ENCODE measurements at regions of chr19 and their contacts with region 1.

Region 1: DNA sequence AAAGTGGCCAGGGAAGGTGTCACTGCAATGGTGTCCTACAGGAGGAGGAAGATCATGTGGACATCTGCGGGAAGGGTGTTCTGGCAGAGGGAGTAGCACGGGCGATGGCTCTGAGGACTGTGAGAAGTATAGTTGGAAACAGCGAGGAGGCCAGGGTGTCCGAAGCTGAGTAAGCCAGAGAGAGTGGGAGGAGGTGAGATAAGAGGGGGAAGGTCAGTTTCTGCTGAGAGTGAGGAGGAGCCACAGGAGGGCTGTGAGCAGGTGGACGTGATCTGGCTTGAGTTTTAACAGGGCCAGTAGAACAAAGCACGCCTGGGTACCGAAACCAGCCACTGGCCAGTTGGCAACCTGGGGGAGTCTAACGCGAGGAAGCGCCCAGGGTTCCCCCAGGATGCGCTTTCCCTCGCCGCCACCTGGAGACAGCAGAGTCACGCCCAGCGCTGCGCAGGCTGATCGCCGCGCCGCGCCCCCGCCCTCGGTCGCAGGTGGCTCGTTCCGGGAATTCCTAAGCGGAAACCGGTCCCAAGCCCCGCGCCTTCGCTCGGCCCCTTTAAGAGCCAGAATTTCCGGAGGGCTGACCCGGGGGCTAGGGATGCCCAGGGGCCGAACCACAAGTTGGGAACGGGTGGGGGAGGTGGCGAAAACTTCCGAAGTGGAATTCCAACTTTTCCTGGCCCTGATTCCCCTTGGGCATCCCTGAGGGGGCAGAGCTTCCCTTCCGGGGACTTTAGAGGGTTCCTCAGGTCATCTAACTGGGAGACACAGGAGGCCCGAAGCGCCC is 1.1 kb upstream of the LSR start:
- DNase-seq: no peak
- H3K4me3 ChIP-seq: peak overlapping the region; percentile 19
- H3K27ac ChIP-seq: no peak overlapping the region
- H3K4me1 ChIP-seq: no peaks in the 10 kb centered on the region
- H3K27me3 ChIP-seq: peaks cover 71% of the 10 kb centered on the region
- CTCF ChIP-seq: no peak; the same call in 1 of the 2 replicates

Region 2: DNA sequence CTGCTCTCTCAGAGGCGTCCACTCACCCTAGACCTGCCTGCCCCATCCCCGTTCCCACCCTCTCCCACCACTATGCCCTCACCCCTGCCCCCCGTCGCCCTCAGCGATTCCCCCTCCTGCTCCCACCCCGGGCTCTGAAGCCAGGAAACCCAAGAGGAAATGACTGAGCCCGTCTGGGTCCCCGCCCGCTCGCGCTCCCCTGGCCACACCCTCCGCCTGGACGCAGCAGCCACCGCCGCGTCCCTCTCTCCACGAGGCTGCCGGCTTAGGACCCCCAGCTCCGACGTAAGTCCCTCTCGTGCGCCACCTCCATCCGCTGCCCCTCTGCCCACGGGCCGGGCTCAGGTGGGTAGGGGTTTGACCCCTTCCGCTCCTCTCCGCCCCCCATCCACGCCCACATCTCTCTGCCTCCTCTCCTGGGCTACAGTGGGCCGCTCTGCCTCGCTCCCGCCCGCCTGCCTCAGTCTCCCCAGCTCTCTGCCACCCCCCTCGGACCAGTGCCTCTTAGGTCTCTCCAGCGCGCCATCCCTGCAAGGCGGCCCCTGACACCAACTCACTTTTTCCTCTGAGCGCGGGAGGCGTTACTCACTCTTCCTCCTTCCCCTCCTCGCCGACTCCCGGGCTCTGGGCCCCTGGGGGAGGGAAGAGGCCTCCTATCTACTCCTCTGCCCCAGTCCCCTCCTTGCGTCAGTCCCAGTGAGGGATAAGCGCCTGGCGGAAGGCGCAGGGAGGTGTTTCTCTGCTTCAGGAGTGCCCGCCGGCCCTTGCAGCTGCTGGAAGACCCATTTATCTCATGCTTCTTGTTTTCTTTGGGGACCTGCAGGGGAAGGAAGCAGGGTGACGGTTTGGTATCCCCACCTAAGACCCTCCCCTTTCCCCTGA is 93.0 kb before region 1 on chr19 and contains the start of gene FXYD5:
- CTCF ChIA-PET with region 1: no interaction called
- POLR2A ChIA-PET with region 1: no interaction called
- intact Hi-C with region 1: loop called (anchors 10 kb)
- DNase-seq: peak; percentile 76
- H3K4me3 ChIP-seq: peak within 1 kb of the TSS; percentile 66
- H3K27ac ChIP-seq: peak within 1 kb of the TSS; percentile 38
- H3K4me1 ChIP-seq: peaks cover 6% of the 10 kb centered on the region
- H3K27me3 ChIP-seq: peaks cover 25% of the 10 kb centered on the region
- CTCF ChIP-seq: no peak
- total RNA-seq, gene FXYD5: 12.7 and 13.6 TPM in 2 replicates

Measured in A673 (cell line).